ENCODE measurements at regions of chr14 and their contacts with region 1.

Region 1: DNA sequence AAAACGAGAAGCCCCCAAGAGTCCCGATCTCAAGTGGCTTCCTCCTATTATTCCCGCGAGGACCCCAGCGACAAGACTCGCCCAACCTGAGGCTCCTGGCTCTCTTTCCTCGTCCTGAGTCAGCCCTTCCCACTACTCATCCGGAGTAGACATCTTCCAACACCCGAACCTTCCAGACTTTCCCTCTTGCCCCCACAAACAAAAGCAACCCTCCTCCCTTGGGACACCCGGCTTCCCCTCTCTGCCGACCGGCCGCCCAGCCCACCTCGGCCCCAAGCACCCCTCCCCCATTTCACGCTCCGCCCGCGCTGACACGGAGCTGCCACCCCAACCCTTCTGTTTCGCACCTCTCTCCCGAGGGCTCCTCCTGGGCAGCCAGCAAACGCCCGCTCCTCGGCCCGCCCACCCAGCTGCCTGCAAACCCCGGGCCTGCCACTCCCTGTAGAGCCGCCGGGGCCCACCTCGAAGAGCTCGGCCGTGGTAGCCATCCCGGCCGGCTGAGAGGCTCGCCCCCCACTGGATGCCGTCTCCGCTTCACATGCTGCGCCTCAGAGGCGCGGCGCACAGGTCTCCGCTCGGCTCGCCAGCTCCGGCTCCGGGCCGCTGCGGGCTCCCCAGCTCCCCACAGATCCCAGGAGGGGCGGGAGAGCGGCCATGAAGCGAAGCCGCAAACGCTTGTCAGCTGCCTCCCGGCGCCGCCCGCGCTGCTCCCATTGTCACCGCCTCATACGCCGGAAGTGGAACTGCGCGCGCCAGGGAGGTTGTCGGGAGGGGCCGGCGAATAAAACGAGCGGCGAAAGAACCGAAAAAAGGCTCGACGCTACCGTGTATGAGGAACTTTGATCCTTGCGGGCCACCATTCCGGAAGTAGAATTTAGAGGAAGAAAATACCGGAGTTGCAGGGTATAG is at the starts of genes AP5M1 and EXOC5:
- DNase-seq: peak; percentile 93 to 96 (median 93)
- H3K4me3 ChIP-seq: peak within 1 kb of the TSS; percentile 78 to 98
- H3K4me3 Mint-ChIP-seq: peak within 1 kb of the TSS; percentile 97 to 100 (median 99)
- H3K27ac ChIP-seq: peak within 1 kb of the TSS; percentile 88
- H3K27ac Mint-ChIP-seq: peak within 1 kb of the TSS; percentile 98 to 100 (median 99)
- H3K4me1 ChIP-seq: peaks cover 55% of the 10 kb centered on the region
- H3K4me1 Mint-ChIP-seq: peaks cover 45 to 76% (median 61%) of the 10 kb centered on the region in 4 donors
- H3K27me3 ChIP-seq: no peaks in the 10 kb centered on the region
- H3K27me3 Mint-ChIP-seq: no peaks in the 10 kb centered on the region
- total RNA-seq, gene AP5M1: 49.5 to 57.5 TPM
- total RNA-seq, gene EXOC5: 48.3 to 51.4 TPM

Region 2: DNA sequence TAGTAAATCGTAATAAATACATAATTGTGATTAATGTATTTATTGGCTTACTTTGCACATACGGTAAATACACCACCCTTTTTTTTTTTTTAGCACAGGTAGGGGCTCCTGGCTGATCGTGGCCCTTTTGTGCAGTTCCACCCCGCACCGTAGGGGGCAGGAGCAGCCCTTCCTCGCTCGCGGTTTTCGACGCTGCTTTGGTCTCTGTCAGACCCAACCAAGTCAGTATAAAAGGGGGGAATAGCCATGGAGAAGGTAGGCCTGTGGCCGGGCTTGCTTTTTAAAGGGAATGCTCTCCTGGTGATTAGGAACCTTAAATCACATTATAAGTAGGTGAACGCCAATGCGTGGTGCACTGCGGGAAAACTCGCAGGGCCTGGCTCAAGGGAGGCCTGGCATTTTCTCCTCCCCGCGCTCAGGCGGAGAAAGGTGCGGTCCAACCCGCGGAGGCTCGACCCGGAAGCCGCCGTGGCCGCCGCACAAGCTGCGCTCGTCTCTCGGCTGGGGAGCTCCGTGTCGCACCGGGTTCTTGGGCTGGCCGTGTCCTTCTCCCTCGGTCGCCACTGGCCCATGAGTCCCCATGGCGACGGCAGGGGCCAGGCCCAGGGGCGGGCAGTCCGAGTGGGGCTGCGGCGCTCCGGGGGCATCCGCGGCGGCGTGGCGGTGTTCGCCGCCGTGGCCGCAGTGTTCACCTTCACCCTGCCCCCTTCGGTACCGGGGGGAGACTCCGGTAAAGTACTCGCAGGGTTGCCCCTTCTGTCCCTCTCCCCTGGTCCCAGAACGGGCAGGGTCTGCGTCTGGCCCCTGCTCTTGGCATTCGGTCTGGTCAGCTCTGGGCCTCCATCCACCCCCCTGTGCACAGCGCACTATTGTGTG is 688.8 kb before region 1 on chr14 and contains the start of gene TMEM260:
- CTCF ChIA-PET with region 1: interaction called, 5 read pairs
- POLR2A ChIA-PET with region 1: interaction called, 12 read pairs
- intact Hi-C with region 1: loop called (anchors 1 kb)
- DNase-seq: peak; percentile 90 to 94 (median 93)
- H3K4me3 ChIP-seq: peak within 1 kb of the TSS; percentile 92 to 94
- H3K4me3 Mint-ChIP-seq: peak within 1 kb of the TSS; percentile 90 to 99 (median 92)
- H3K27ac ChIP-seq: peak within 1 kb of the TSS; percentile 83
- H3K27ac Mint-ChIP-seq: peak within 1 kb of the TSS in 6 of 7 donors; percentile 91 to 99 (median 97)
- H3K4me1 ChIP-seq: peaks cover 41% of the 10 kb centered on the region
- H3K4me1 Mint-ChIP-seq: peaks cover 30 to 48% (median 35%) of the 10 kb centered on the region in 4 donors
- H3K27me3 ChIP-seq: no peaks in the 10 kb centered on the region
- H3K27me3 Mint-ChIP-seq: no peaks in the 10 kb centered on the region
- total RNA-seq, gene TMEM260: 33.6 to 37.0 TPM

Region 3: GRCh38 chr14:57221931-57222330 is 46.5 kb before region 1 on chr14:
- CTCF ChIA-PET with region 1: interaction called, 3 read pairs
- POLR2A ChIA-PET with region 1: no interaction called
- intact Hi-C with region 1: loop called (anchors 5 kb)
- DNase-seq: no peak
- H3K4me3 ChIP-seq: no peak overlapping the region
- H3K4me3 Mint-ChIP-seq: no peak overlapping the region
- H3K27ac ChIP-seq: no peak overlapping the region
- H3K27ac Mint-ChIP-seq: no peak overlapping the region
- H3K4me1 ChIP-seq: no peaks in the 10 kb centered on the region
- H3K4me1 Mint-ChIP-seq: peaks cover 0 to 12% (median 2%) of the 10 kb centered on the region in 4 donors
- H3K27me3 ChIP-seq: no peaks in the 10 kb centered on the region
- H3K27me3 Mint-ChIP-seq: no peaks in the 10 kb centered on the region

Region 4: DNA sequence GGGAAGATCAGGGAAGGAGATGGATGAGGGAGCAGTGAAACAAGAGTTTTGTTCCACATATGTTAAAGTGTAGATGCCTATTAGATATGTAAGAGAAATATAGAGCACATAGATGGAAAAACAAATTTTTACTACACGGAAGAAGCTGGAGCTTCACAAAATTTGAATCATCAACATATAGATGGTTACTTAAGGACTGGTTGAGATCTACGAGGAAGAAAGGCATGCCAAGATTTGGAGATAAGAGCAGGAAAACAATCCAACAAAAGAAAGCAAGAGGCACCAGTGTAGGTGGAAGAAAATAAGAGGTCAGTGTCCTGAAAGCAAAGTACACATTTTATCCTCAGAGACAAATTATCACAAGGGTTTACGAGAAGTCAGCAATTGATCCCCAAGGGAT is 11.2 kb before region 1 on chr14:
- CTCF ChIA-PET with region 1: interaction called, 5 read pairs
- POLR2A ChIA-PET with region 1: interaction called, 10 read pairs
- intact Hi-C with region 1: no loop called
- DNase-seq: no peak
- H3K4me3 ChIP-seq: no peak overlapping the region
- H3K4me3 Mint-ChIP-seq: no peak overlapping the region
- H3K27ac ChIP-seq: no peak overlapping the region
- H3K27ac Mint-ChIP-seq: no peak overlapping the region
- H3K4me1 ChIP-seq: peaks cover 11% of the 10 kb centered on the region
- H3K4me1 Mint-ChIP-seq: peaks cover 38 to 67% (median 50%) of the 10 kb centered on the region in 4 donors
- H3K27me3 ChIP-seq: no peaks in the 10 kb centered on the region
- H3K27me3 Mint-ChIP-seq: no peaks in the 10 kb centered on the region

Region 5: GRCh38 chr14:57287745-57288144 is 19.3 kb after region 1 on chr14:
- CTCF ChIA-PET with region 1: interaction called, 4 read pairs
- POLR2A ChIA-PET with region 1: interaction called, 14 read pairs
- intact Hi-C with region 1: no loop called
- DNase-seq: no peak
- H3K4me3 ChIP-seq: no peak overlapping the region
- H3K4me3 Mint-ChIP-seq: no peak overlapping the region
- H3K27ac ChIP-seq: no peak overlapping the region
- H3K27ac Mint-ChIP-seq: no peak overlapping the region
- H3K4me1 ChIP-seq: no peaks in the 10 kb centered on the region
- H3K4me1 Mint-ChIP-seq: no peaks in the 10 kb centered on the region
- H3K27me3 ChIP-seq: no peaks in the 10 kb centered on the region
- H3K27me3 Mint-ChIP-seq: no peaks in the 10 kb centered on the region

Region 6: GRCh38 chr14:57317316-57317715 is 48.9 kb after region 1 on chr14:
- CTCF ChIA-PET with region 1: no interaction called
- POLR2A ChIA-PET with region 1: no interaction called
- intact Hi-C with region 1: no loop called
- DNase-seq: peak; percentile 65 to 73 (median 69)
- H3K4me3 ChIP-seq: no peak overlapping the region
- H3K4me3 Mint-ChIP-seq: no peak overlapping the region
- H3K27ac ChIP-seq: no peak overlapping the region
- H3K27ac Mint-ChIP-seq: no peak overlapping the region
- H3K4me1 ChIP-seq: no peaks in the 10 kb centered on the region
- H3K4me1 Mint-ChIP-seq: peaks cover 0 to 6% (median 4%) of the 10 kb centered on the region in 4 donors
- H3K27me3 ChIP-seq: no peaks in the 10 kb centered on the region
- H3K27me3 Mint-ChIP-seq: peaks cover 2 to 8% of the 10 kb centered on the region in 2 donors

Region 7: GRCh38 chr14:57390028-57390805 is 121.8 kb after region 1 on chr14 and contains the start of gene NAA30:
- CTCF ChIA-PET with region 1: no interaction called
- POLR2A ChIA-PET with region 1: interaction called, 34 read pairs
- intact Hi-C with region 1: loop called (anchors 1 kb)
- DNase-seq: peak; percentile 93 to 98 (median 96)
- H3K4me3 ChIP-seq: peak within 1 kb of the TSS; percentile 50 to 85
- H3K4me3 Mint-ChIP-seq: peak within 1 kb of the TSS; percentile 90 to 98 (median 94)
- H3K27ac ChIP-seq: peak within 1 kb of the TSS; percentile 83
- H3K27ac Mint-ChIP-seq: peak within 1 kb of the TSS; percentile 88 to 97 (median 96)
- H3K4me1 ChIP-seq: peaks cover 42% of the 10 kb centered on the region
- H3K4me1 Mint-ChIP-seq: peaks cover 30 to 53% (median 42%) of the 10 kb centered on the region in 4 donors
- H3K27me3 ChIP-seq: no peaks in the 10 kb centered on the region
- H3K27me3 Mint-ChIP-seq: no peaks in the 10 kb centered on the region
- total RNA-seq, gene NAA30: 18.6 to 21.8 TPM

Region 8: GRCh38 chr14:58199726-58200479 is 931.5 kb after region 1 on chr14 and contains the start of gene ACTR10:
- CTCF ChIA-PET with region 1: no interaction called
- POLR2A ChIA-PET with region 1: no interaction called
- intact Hi-C with region 1: loop called (anchors 5 kb)
- DNase-seq: peak; percentile 84 to 91 (median 87)
- H3K4me3 ChIP-seq: peak within 1 kb of the TSS; percentile 64 to 75
- H3K4me3 Mint-ChIP-seq: peak within 1 kb of the TSS; percentile 94 to 97 (median 96)
- H3K27ac ChIP-seq: peak within 1 kb of the TSS; percentile 78
- H3K27ac Mint-ChIP-seq: peak within 1 kb of the TSS; percentile 94 to 99 (median 98)
- H3K4me1 ChIP-seq: peaks cover 33% of the 10 kb centered on the region
- H3K4me1 Mint-ChIP-seq: peaks cover 22 to 48% (median 34%) of the 10 kb centered on the region in 4 donors
- H3K27me3 ChIP-seq: no peaks in the 10 kb centered on the region
- H3K27me3 Mint-ChIP-seq: no peaks in the 10 kb centered on the region
- total RNA-seq, gene ACTR10: 53.7 to 54.9 TPM

Measured in CD4-positive, alpha-beta memory T cell (primary cell).